H1 (cell line): ENCODE measurements at regions of chr9 and their contacts with region 1.

Region 1: GRCh38 chr9:5879419-5880181 is 11.1 kb upstream of the MLANA start:
- DNase-seq: no peak
- H3K4me3 ChIP-seq: no peak overlapping the region
- H3K27ac ChIP-seq: no peak overlapping the region
- H3K4me1 ChIP-seq: 0 out of 7 replicates have a peak, but pooled peaks cover 0 to 3% (median 0%) of the 10 kb centered on the region in 4 experiments
- H3K27me3 ChIP-seq: no peaks in the 10 kb centered on the region
- CTCF ChIP-seq: no peak
- EP300 ChIP-seq: no peak
- POLR2A ChIP-seq: no peak
- RAD21 ChIP-seq: no peak

Region 2: DNA sequence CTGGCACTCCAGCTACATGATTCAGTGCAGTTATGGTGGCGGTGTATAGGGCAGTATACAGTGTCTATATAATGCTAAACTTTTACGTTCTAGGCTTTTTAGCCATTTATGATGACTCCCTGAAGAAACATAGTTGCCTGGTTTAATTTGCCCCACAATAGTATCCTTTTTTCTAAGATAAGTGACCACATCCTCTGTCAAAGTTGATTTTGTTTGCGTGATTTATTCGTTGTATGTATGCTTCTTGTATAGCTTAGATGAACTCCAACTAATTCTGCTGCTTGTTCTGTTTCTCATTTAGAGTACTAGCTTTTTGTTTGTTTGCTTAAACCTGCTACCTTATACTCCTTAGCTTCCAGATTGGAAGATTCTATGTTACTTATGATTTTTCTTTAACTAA is 130.3 kb before region 1 on chr9:
- CTCF ChIA-PET with region 1: no interaction called
- POLR2A ChIA-PET with region 1: no interaction called
- DNase-seq: no peak
- H3K4me3 ChIP-seq: no peak overlapping the region
- H3K27ac ChIP-seq: no peak overlapping the region
- H3K4me1 ChIP-seq: no peaks in the 10 kb centered on the region
- H3K27me3 ChIP-seq: no peaks in the 10 kb centered on the region
- CTCF ChIP-seq: no peak
- EP300 ChIP-seq: no peak
- POLR2A ChIP-seq: no peak
- RAD21 ChIP-seq: no peak

Region 3: GRCh38 chr9:5832543-5833529 is 46.8 kb before region 1 on chr9 and contains the start of gene ERMP1:
- CTCF ChIA-PET with region 1: interaction called, 12 read pairs
- POLR2A ChIA-PET with region 1: no interaction called
- DNase-seq: peak; percentile 51 to 96
- H3K4me3 ChIP-seq: peak within 1 kb of the TSS; percentile 49 to 79 (median 74)
- H3K27ac ChIP-seq: no peak within 1 kb of the TSS; the same call in 1 of the 2 replicates
- H3K4me1 ChIP-seq: peaks cover 0 to 9% (median 4%) of the 10 kb centered on the region in 4 experiments; a peak in 4 of 7 replicates
- H3K27me3 ChIP-seq: no peaks in the 10 kb centered on the region; a peak in 1 of 7 replicates
- CTCF ChIP-seq: peak; percentile 74 to 86 (median 85)
- EP300 ChIP-seq: peak in 1 of 2 experiments; percentile 95; a peak in 2 of 3 replicates
- POLR2A ChIP-seq: peak; percentile 62 to 65
- RAD21 ChIP-seq: peak; percentile 40 to 52; a peak in 3 of 4 replicates
- total RNA-seq, gene ERMP1: 16.5 and 16.7 TPM in 2 replicates

Region 4: DNA sequence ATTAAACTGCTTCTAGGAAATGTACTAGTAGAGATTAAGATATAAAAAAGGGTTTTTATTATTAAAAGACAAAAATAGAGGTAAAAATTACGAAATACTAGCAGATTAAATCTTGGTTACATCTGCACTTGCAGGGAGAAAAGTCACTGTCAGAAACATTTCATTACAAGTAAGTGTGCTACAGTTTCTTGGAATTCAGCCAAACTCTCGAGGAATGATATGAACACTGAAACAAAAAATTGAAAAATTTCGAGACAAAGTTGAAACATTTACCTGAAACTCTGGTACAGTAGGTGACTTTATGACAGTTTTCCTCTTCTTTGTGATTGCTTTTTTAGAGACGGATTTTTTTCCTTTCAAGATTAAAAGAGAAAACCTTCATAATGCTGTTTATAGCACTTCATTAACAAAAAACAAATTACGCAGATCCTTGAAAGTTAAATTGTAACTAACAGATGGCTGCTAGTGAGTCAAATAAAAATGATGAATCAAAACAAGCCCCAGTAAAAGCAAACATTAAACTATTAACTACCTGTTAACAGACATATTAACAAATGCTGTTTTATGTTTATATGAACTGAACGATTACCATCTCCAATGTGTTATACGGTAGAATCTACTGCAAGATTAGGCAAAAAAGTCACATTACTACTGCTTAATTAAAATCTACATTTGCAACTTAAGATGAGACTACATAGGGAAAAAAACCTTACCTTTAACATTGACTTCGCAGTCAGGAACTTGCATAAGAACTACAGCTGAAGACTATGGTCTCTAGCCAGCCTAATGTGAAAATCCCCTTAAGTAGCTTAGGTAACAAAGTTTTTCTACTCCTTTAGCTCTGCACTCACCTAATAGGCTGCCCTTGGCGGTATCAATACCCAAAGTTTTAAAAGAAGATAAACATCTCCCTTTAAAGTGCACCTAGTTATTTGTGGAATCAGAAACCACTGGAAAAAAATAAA is 74.4 kb after region 1 on chr9:
- CTCF ChIA-PET with region 1: no interaction called
- POLR2A ChIA-PET with region 1: no interaction called
- DNase-seq: no peak
- H3K4me3 ChIP-seq: no peak overlapping the region
- H3K27ac ChIP-seq: no peak overlapping the region
- H3K4me1 ChIP-seq: no peaks in the 10 kb centered on the region
- H3K27me3 ChIP-seq: no peaks in the 10 kb centered on the region
- CTCF ChIP-seq: no peak
- EP300 ChIP-seq: no peak
- POLR2A ChIP-seq: no peak
- RAD21 ChIP-seq: no peak